Panc1 (cell line): ENCODE measurements at regions of chr12 and their contacts with region 1.

Region 1: GRCh38 chr12:42237052-42237852 is 796 bp downstream of the YAF2 start:
- DNase-seq: peak; percentile 30
- ATAC-seq: peak; percentile 88
- H3K4me3 ChIP-seq: peak overlapping the region; percentile 69 to 74
- H3K27ac ChIP-seq: peak overlapping the region; percentile 85
- H3K4me1 ChIP-seq: peaks cover 17% of the 10 kb centered on the region; the same call in 1 of the 2 replicates
- H3K27me3 ChIP-seq: no peaks in the 10 kb centered on the region
- CTCF ChIP-seq: peak; percentile 65

Region 2: DNA sequence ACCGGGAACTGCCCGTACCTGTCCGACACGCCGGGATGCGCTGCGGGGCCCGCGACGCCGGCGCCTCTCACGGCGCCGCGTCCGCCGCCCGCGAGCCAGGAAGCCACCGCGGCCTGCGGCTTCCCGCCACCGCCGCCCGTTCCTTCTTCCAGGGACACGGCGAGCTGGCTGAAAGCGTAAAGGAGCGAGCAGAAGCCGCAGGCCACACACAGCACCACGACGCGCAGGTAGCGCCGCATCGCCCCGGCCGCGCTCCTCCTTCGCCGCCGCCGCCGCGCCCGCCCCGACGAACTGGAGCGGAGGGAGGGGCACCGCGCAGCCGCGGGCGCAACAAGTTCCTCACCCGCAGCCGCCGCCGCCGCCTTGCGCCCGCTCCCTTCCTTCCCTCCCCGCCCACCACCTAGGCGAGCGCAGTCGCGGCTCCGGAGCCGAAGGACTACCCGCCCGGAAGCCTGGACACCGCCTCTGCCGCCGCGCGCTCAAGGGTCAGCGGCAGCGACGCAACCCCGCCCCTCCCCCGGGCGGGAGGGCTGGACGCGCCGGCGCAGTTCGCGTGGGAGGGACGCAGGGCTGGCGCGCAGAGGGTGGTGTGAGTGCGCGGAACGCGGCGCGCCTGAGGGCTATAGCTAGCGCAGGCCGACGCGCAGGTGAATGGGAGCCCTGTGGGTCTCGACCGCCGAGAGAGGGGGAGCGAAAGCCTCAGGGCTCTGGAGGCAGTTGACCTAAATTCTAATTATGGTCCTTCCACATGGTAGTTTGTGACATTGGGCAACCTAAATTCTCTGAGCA is 92.7 kb before region 1 on chr12 and contains the start of gene GXYLT1:
- CTCF ChIA-PET with region 1: no interaction called
- POLR2A ChIA-PET with region 1: no interaction called
- in situ Hi-C with region 1: no loop called
- intact Hi-C with region 1: loop called (anchors 10 kb)
- DNase-seq: no peak
- ATAC-seq: peak; percentile 97
- H3K4me3 ChIP-seq: peak within 1 kb of the TSS; percentile 70 to 88
- H3K27ac ChIP-seq: peak within 1 kb of the TSS; percentile 94
- H3K4me1 ChIP-seq: peaks cover 29% of the 10 kb centered on the region
- H3K27me3 ChIP-seq: no peaks in the 10 kb centered on the region
- CTCF ChIP-seq: no peak
- total RNA-seq, gene GXYLT1: 17.4 TPM

Region 3: DNA sequence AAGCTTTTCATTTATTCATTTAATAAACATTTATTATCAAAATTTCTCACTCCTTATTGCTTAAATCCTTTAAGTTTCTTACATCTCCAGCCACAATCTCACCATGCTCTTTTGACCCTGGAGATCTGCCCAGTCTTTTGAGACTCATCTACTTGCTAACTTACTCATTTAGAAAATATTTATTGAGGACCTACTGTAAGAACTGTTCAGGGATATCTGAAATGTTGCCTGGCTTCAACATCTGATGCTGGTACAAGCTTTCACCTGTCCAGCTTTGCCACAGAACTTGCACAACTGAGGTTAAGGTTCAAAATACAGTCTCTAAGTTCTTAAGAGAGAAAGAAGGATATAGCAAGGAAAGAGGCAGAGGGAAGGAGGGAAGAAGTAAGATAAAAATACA is 75.1 kb before region 1 on chr12:
- CTCF ChIA-PET with region 1: no interaction called
- POLR2A ChIA-PET with region 1: interaction called, 16 read pairs
- in situ Hi-C with region 1: no loop called
- intact Hi-C with region 1: no loop called
- DNase-seq: no peak
- ATAC-seq: no peak
- H3K4me3 ChIP-seq: no peak overlapping the region
- H3K27ac ChIP-seq: no peak overlapping the region
- H3K4me1 ChIP-seq: peaks cover 6% of the 10 kb centered on the region; the same call in 1 of the 2 replicates
- H3K27me3 ChIP-seq: no peaks in the 10 kb centered on the region
- CTCF ChIP-seq: no peak

Region 4: GRCh38 chr12:42299392-42300308 is 62.4 kb after region 1 on chr12:
- CTCF ChIA-PET with region 1: no interaction called
- POLR2A ChIA-PET with region 1: no interaction called
- in situ Hi-C with region 1: no loop called
- intact Hi-C with region 1: no loop called
- DNase-seq: no peak
- ATAC-seq: no peak; the same call in 1 of the 2 replicates
- H3K4me3 ChIP-seq: no peak overlapping the region
- H3K27ac ChIP-seq: no peak overlapping the region
- H3K4me1 ChIP-seq: no peaks in the 10 kb centered on the region
- H3K27me3 ChIP-seq: no peaks in the 10 kb centered on the region
- CTCF ChIP-seq: no peak

Region 5: DNA sequence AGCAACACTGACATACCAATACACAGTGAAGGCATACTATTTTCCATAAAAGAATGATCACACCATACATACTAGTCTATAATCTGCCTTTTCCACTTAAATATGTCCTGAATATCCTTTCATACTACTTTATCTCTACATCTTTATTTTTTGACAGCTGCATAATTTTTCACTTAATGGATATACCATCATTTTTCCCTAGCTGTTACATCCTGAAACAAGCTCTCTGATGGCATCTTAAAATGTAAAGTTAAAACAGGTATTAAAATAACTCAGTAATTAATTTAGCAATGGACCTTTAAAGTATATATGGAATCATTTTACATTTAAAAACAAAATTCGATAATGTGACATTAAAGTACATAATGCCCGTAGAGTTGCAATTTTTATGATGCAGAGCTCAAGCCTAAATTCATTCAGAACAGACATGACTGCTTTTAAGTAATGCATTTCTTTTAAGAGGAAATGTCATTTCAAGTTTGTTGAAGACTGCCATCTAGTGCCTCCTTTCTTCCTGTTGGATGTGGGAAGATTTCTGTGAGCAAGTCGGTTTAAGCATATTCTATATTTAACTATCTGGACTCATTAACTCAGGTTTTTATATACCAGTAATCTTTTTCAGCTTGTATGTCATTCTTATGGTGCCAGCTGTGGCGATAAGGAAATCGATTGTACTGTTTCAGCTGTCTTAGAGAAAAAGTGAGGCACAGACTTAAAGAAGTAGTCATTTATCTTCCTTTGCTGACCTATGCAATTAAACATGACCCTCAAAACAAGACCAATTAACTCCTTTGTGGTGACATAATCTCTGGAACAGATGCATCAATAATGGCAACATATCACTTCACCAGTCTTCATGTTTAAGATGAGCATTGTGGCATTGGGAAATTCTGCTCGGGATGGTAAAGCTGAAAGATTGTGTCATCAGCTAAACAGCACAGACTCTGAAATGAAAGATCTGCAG is 332.0 kb after region 1 on chr12:
- CTCF ChIA-PET with region 1: no interaction called
- POLR2A ChIA-PET with region 1: no interaction called
- in situ Hi-C with region 1: no loop called
- intact Hi-C with region 1: no loop called
- DNase-seq: peak; percentile 25
- ATAC-seq: peak; percentile 72; the same call in 1 of the 2 replicates
- H3K4me3 ChIP-seq: no peak overlapping the region
- H3K27ac ChIP-seq: no peak overlapping the region
- H3K4me1 ChIP-seq: peaks cover 7% of the 10 kb centered on the region
- H3K27me3 ChIP-seq: no peaks in the 10 kb centered on the region
- CTCF ChIP-seq: peak; percentile 73; the same call in 1 of the 2 replicates